Caco-2 (cell line): ENCODE measurements at regions of chr20 and their contacts with region 1.

Region 1: DNA sequence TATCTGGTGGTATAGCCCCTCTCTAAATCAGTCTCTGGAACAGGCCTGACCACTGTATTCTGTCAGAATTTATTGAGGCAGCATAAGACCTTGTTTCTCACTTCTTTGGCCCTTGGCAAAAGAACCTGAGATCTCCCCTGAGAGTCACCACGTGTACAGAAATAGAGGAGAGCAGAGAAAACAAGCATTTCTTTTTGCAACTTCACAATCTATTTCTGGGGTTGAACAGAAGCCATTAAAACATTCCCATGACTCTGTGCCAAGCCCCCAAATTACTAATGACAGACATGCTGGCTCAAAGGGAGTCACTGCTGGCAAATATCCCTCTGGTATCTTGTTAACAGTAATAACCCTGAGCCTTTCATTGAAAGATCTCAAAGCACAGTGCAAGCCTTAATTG is 395.3 kb downstream of the MAFB start:
- DNase-seq: no peak
- H3K4me3 ChIP-seq: no peak overlapping the region
- H3K4me3 Mint-ChIP-seq: no peak overlapping the region
- H3K27ac Mint-ChIP-seq: no peak overlapping the region
- H3K4me1 ChIP-seq: no peaks in the 10 kb centered on the region
- H3K4me1 Mint-ChIP-seq: no peaks in the 10 kb centered on the region
- H3K27me3 ChIP-seq: no peaks in the 10 kb centered on the region
- H3K27me3 Mint-ChIP-seq: peaks cover 9% of the 10 kb centered on the region
- CTCF ChIP-seq: no peak

Region 2: GRCh38 chr20:40309731-40310130 is 16.0 kb after region 1 on chr20:
- CTCF ChIA-PET with region 1: no interaction called
- POLR2A ChIA-PET with region 1: no interaction called
- intact Hi-C with region 1: loop called (anchors 2 kb)
- DNase-seq: no peak
- H3K4me3 ChIP-seq: no peak overlapping the region
- H3K4me3 Mint-ChIP-seq: no peak overlapping the region
- H3K27ac Mint-ChIP-seq: no peak overlapping the region
- H3K4me1 ChIP-seq: no peaks in the 10 kb centered on the region
- H3K4me1 Mint-ChIP-seq: no peaks in the 10 kb centered on the region
- H3K27me3 ChIP-seq: no peaks in the 10 kb centered on the region
- H3K27me3 Mint-ChIP-seq: peaks cover 2% of the 10 kb centered on the region
- CTCF ChIP-seq: no peak